ENCODE measurements at regions of chr9 and their contacts with region 1.

Region 1: DNA sequence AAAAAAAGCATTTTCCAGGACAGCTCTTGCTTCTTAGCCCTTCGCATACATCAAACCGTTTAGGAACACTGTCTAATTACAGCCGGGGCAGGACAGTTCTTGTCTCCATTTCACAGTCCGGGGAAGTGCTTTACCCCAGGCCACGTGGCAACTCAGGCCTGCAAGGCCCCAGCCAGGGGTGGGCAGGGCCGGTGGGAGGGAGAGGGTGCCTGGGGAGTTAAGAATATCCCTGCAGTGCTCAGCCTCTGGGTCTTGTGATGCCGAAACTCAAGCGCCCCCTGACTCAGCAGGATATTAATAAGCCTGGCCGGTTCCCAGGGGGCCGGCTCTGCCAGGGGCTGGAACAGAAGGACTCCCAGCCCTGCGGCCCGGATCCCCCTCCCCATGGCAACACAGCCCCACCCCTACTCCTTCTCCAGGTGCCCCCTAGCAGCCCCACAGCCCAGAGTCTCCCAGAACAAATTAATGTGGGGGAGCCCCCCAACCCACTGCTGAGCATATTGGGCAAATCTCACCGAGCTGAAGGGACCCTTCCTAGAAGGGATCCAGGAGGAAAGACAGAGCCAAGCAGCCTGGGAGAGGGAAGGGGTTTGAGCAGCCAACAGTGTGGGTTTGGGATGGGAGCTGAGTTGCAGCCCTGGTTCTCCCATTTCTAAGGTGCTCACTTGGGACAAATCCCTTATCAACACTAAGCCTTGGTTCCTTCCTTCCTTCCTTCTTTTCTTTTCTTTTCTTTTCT is 45.3 kb downstream of the PLPP7 start:
- DNase-seq: peak; percentile 56
- H3K4me3 ChIP-seq: no peak overlapping the region
- H3K27ac ChIP-seq: no peak overlapping the region
- H3K4me1 ChIP-seq: peaks cover 16% of the 10 kb centered on the region
- H3K27me3 ChIP-seq: no peaks in the 10 kb centered on the region
- CTCF ChIP-seq: no peak

Region 2: GRCh38 chr9:131053896-131054295 is 280.9 kb before region 1 on chr9:
- CTCF ChIA-PET with region 1: interaction called, 19 read pairs
- POLR2A ChIA-PET with region 1: no interaction called
- intact Hi-C with region 1: loop called (anchors 1 kb)
- DNase-seq: no peak
- H3K4me3 ChIP-seq: no peak overlapping the region
- H3K27ac ChIP-seq: no peak overlapping the region
- H3K4me1 ChIP-seq: peaks cover 4% of the 10 kb centered on the region
- H3K27me3 ChIP-seq: no peaks in the 10 kb centered on the region
- CTCF ChIP-seq: no peak

Region 3: GRCh38 chr9:131178382-131178781 is 156.4 kb before region 1 on chr9:
- CTCF ChIA-PET with region 1: interaction called, 12 read pairs
- POLR2A ChIA-PET with region 1: no interaction called
- intact Hi-C with region 1: loop called (anchors 1 kb)
- DNase-seq: peak; percentile 77
- H3K4me3 ChIP-seq: no peak overlapping the region
- H3K27ac ChIP-seq: no peak overlapping the region
- H3K4me1 ChIP-seq: no peaks in the 10 kb centered on the region
- H3K27me3 ChIP-seq: no peaks in the 10 kb centered on the region
- CTCF ChIP-seq: peak; percentile 95

Measured in A673 (cell line).